ENCODE measurements at regions of chr12 and their contacts with region 1.

Region 1: GRCh38 chr12:48890657-48891418 is 25.2 kb upstream of the RND1 start:
- DNase-seq: peak; percentile 60 to 92 (median 78)
- ATAC-seq: peak; percentile 91
- H3K4me3 ChIP-seq: peak overlapping the region in 1 of 2 donors; percentile 11
- H3K27ac ChIP-seq: no peak overlapping the region
- H3K4me1 ChIP-seq: peaks cover 3 to 8% of the 10 kb centered on the region in 2 donors
- H3K27me3 ChIP-seq: peaks cover 13 to 28% of the 10 kb centered on the region in 2 donors
- CTCF ChIP-seq: peak; percentile 91 to 93

Region 2: GRCh38 chr12:48854488-48854887 is 36.4 kb before region 1 on chr12:
- intact Hi-C with region 1: loop called in 1 of 2 experiments (anchors 2 kb)
- DNase-seq: no peak
- ATAC-seq: no peak
- H3K4me3 ChIP-seq: no peak overlapping the region
- H3K27ac ChIP-seq: no peak overlapping the region
- H3K4me1 ChIP-seq: peaks cover 13 to 32% of the 10 kb centered on the region in 2 donors
- H3K27me3 ChIP-seq: no peaks in the 10 kb centered on the region
- CTCF ChIP-seq: no peak